Breast epithelium (tissue), 4 donors: ENCODE measurements at regions of chr17 and their contacts with region 1.

Region 1: DNA sequence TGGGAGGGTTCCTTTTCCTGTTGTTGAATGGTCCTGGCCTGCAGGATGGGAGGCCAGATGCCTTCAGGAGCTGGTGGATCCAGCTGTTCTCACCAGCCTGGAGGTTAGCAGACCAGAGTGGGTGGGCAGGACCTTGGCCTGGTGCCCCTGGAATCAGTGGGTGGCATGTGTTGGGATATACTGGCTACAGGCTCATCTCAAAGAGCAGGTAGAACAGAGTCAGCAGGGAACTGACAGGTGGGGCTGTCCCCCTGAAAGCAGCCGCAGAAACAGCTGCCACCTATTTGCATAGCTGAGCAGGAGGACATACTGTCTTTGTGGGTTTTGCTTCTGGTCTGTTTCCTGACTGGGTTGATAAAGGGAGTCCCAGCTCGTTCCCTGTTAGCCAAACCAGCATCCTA is 144.1 kb downstream of the RAB11FIP4 start:
- DNase-seq: no peak
- H3K4me3 ChIP-seq: no peak overlapping the region
- H3K27ac ChIP-seq: no peak overlapping the region
- H3K4me1 ChIP-seq: peaks cover 0 to 11% of the 10 kb centered on the region in 2 donors
- H3K27me3 ChIP-seq: no peaks in the 10 kb centered on the region
- CTCF ChIP-seq: no peak
- POLR2A ChIP-seq: no peak

Region 2: GRCh38 chr17:29948448-29949215 is 1586.9 kb before region 1 on chr17:
- intact Hi-C with region 1: no loop called
- DNase-seq: no peak
- H3K4me3 ChIP-seq: no peak overlapping the region
- H3K27ac ChIP-seq: no peak overlapping the region
- H3K4me1 ChIP-seq: no peaks in the 10 kb centered on the region
- H3K27me3 ChIP-seq: no peaks in the 10 kb centered on the region
- CTCF ChIP-seq: no peak
- POLR2A ChIP-seq: no peak

Region 3: GRCh38 chr17:30218799-30219198 is 1316.8 kb before region 1 on chr17:
- intact Hi-C with region 1: loop called (anchors 5 kb)
- DNase-seq: no peak
- H3K4me3 ChIP-seq: no peak overlapping the region
- H3K27ac ChIP-seq: no peak overlapping the region
- H3K4me1 ChIP-seq: no peaks in the 10 kb centered on the region
- H3K27me3 ChIP-seq: no peaks in the 10 kb centered on the region
- CTCF ChIP-seq: no peak
- POLR2A ChIP-seq: no peak

Region 4: GRCh38 chr17:30513346-30513745 is 1022.2 kb before region 1 on chr17:
- intact Hi-C with region 1: no loop called
- DNase-seq: no peak
- H3K4me3 ChIP-seq: no peak overlapping the region
- H3K27ac ChIP-seq: no peak overlapping the region
- H3K4me1 ChIP-seq: no peaks in the 10 kb centered on the region
- H3K27me3 ChIP-seq: no peaks in the 10 kb centered on the region
- CTCF ChIP-seq: no peak
- POLR2A ChIP-seq: no peak